ENCODE measurements at regions of chr1 and their contacts with region 1.

Region 1: GRCh38 chr1:47225430-47226100 is 6.5 kb downstream of the TAL1 start:
- DNase-seq: no peak
- ATAC-seq: no peak
- H3K4me3 Mint-ChIP-seq: no peak overlapping the region
- H3K27ac Mint-ChIP-seq: no peak overlapping the region
- H3K4me1 Mint-ChIP-seq: peaks cover 11% of the 10 kb centered on the region
- H3K27me3 Mint-ChIP-seq: peaks cover 42% of the 10 kb centered on the region

Region 2: GRCh38 chr1:47241114-47242113 is 15.8 kb after region 1 on chr1:
- CTCF ChIA-PET with region 1: no interaction called
- POLR2A ChIA-PET with region 1: no interaction called
- intact Hi-C with region 1: loop called in 1 of 2 experiments (anchors 2 kb)
- DNase-seq: no peak
- ATAC-seq: no peak
- H3K4me3 Mint-ChIP-seq: no peak overlapping the region
- H3K27ac Mint-ChIP-seq: no peak overlapping the region
- H3K4me1 Mint-ChIP-seq: peaks cover 7% of the 10 kb centered on the region
- H3K27me3 Mint-ChIP-seq: peaks cover 31% of the 10 kb centered on the region

Region 3: GRCh38 chr1:47388891-47389238 is 163.3 kb after region 1 on chr1:
- CTCF ChIA-PET with region 1: no interaction called
- POLR2A ChIA-PET with region 1: no interaction called
- intact Hi-C with region 1: no loop called
- DNase-seq: peak; percentile 76
- ATAC-seq: peak; percentile 82
- H3K4me3 Mint-ChIP-seq: no peak overlapping the region
- H3K27ac Mint-ChIP-seq: no peak overlapping the region
- H3K4me1 Mint-ChIP-seq: no peaks in the 10 kb centered on the region
- H3K27me3 Mint-ChIP-seq: peaks cover 3% of the 10 kb centered on the region

Region 4: GRCh38 chr1:47449822-47450552 is 224.4 kb after region 1 on chr1:
- CTCF ChIA-PET with region 1: no interaction called
- POLR2A ChIA-PET with region 1: no interaction called
- intact Hi-C with region 1: loop called (anchors 2 to 10 kb)
- DNase-seq: peak; percentile 43
- ATAC-seq: no peak
- H3K4me3 Mint-ChIP-seq: no peak overlapping the region
- H3K27ac Mint-ChIP-seq: no peak overlapping the region
- H3K4me1 Mint-ChIP-seq: peaks cover 7% of the 10 kb centered on the region
- H3K27me3 Mint-ChIP-seq: peaks cover 69% of the 10 kb centered on the region

Measured in activated CD4-positive, alpha-beta T cell treated with anti-CD3 and anti-CD28 coated beads for 36 hours (primary cell).